Dendritic cell treated with granulocyte-macrophage colony-stimulating factor and Interleukin-4, amounts not matched to agents 40 ng/mL and 50 ng/mL, for 4 days (primary cell): ENCODE measurements at regions of chr3 and their contacts with region 1.

Region 1: DNA sequence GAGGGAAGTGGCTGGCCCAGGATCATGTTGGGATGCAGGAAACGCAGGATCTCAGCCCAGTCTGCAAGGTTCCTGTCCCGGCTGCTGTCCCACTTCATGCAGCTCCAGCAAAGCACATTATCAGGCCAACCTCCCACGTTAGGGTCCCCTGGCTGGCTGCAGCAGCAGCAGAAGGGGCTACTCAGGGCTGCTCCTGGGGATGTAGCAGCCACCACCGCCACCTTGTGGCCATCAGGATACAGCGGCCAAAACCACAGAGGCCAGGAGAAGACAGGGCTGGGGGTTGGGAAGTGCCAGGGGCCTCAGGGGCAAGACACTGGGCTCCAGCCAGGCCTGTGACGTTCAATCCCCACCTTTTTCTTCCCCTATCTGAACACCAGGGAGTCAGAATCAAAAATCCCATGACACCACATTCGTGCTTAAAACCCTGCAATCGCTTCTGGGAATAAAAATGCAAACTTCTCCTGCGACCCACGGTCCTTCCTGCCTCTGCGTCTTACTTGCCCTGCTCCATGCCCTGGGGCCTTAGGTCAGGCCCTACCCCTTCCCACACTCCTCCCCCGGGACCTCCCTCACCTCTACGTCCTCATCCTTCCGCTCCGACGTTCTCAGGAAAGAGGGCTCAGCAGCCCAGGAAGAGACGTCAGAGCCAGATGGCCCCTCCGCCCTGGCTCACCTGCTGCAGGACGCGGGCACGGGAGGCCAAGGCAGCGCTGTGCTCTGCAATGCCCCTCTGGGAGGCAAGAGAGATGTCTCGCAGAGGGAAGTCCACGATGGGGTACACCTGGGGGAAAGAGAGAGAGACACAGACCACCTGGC is 21.5 kb downstream of the SSUH2 start:
- H3K4me3 Mint-ChIP-seq: peak overlapping the region; percentile 44
- H3K27ac Mint-ChIP-seq: peak overlapping the region; percentile 10
- H3K4me1 Mint-ChIP-seq: peaks cover 16% of the 10 kb centered on the region
- H3K27me3 Mint-ChIP-seq: peaks cover 13% of the 10 kb centered on the region

Region 2: DNA sequence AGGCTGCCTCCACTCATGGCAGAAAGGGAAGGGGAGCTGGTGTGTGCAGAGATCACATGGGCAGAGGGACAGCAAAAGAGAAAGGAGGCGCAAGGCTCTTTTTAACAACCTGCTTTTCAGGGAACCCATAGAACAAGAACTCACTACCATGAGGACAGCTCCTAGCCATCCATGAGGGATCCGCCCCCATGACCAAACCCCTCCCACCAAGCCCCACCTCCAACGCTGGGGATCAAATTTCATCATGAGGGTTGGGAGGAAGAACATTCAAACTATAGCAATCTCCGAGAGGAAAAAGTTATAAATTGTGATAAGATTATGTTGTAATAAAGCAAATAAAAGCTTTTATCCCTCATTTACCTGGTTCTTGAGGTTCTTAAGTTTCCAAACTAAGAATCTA is 206.1 kb before region 1 on chr3:
- intact Hi-C with region 1: loop called (anchors 1 kb)
- H3K4me3 Mint-ChIP-seq: peak overlapping the region; percentile 17
- H3K27ac Mint-ChIP-seq: no peak overlapping the region
- H3K4me1 Mint-ChIP-seq: no peaks in the 10 kb centered on the region
- H3K27me3 Mint-ChIP-seq: no peaks in the 10 kb centered on the region

Region 3: GRCh38 chr3:8441969-8442559 is 181.0 kb before region 1 on chr3:
- intact Hi-C with region 1: loop called (anchors 1 kb)
- H3K4me3 Mint-ChIP-seq: no peak overlapping the region
- H3K27ac Mint-ChIP-seq: no peak overlapping the region
- H3K4me1 Mint-ChIP-seq: no peaks in the 10 kb centered on the region
- H3K27me3 Mint-ChIP-seq: peaks cover 2% of the 10 kb centered on the region

Region 4: GRCh38 chr3:8482960-8483665 is 140.0 kb before region 1 on chr3:
- intact Hi-C with region 1: loop called (anchors 5 kb)
- H3K4me3 Mint-ChIP-seq: no peak overlapping the region
- H3K27ac Mint-ChIP-seq: no peak overlapping the region
- H3K4me1 Mint-ChIP-seq: peaks cover 7% of the 10 kb centered on the region
- H3K27me3 Mint-ChIP-seq: peaks cover 3% of the 10 kb centered on the region

Region 5: DNA sequence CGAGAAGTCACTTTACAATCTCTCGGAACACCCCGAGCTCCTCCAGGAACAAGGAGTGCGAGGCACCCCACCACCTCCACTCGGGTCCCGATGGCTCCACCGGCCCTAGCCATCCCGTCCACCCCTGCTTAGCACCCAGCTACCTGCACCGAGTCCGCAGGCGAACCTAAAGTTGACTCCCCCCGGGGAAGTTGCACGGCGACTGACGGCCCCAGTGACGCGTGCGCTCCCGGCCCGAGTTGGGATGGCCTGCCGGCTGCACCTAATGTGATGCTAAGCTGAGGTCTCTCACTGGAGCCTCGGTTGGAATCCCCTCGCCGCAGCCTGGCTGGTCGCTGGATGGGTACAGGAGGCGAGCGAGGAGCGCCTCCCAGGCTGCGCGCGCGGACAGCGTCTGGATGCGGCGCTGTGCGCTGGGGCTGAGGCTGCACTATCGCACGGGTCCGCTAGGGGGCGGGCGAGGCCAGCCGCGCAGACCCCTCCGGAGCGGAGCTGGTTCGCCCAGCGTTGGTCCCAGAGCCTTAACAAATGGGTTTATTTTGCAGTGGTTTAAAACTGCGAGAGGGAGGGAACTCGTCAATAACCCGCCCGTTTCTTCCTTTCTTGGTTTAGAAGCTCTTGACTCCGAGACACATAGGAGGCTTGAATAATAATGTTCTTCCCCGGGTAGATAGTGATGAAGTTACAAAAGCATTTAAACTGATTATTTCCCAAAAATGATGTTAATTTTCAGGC is 146.2 kb after region 1 on chr3 and contains the start of gene OXTR:
- intact Hi-C with region 1: no loop called
- H3K4me3 Mint-ChIP-seq: peak within 1 kb of the TSS; percentile 62
- H3K27ac Mint-ChIP-seq: no peak within 1 kb of the TSS
- H3K4me1 Mint-ChIP-seq: peaks cover 14% of the 10 kb centered on the region
- H3K27me3 Mint-ChIP-seq: peaks cover 51% of the 10 kb centered on the region